Caco-2 (cell line): ENCODE measurements at regions of chr13 and their contacts with region 1.

Region 1: DNA sequence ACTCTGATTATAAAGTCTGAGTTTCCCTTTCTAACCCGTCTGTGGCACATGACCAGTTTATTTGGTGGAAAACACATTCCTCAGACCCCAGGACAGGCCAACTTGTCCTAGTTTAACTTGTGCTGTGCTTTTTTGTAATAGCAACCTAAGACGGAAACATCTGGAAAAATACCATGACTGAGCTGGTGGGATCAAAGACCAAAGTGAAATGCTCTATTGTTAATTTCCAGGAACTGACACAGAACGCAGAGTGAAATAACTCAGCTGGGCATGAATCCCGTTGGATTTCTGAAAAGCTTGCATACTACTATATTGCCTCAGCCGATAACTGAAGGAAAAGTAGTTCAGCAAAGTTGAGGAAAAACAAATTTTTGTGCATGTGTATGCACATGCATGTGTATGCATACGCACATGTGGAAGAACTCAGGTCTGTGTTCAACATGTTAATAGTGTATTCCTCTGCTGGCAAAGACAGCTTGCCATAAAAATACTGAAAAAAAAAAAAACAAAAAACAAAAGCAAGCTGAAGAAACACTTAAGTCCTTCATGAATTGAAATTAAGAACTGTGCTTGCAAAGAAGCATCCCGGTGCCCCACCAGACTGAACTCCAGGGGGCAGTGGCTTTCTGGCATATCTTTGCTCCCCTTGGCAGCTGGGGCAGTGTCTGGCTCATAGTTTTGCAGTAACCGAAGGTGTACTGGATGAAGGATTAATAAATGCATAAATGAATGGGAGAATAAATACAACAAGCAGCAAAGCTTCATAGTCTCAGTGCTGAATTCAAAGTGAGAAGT is 187.8 kb downstream of the LHFPL6 start:
- DNase-seq: peak; percentile 39 to 52
- H3K4me3 ChIP-seq: no peak overlapping the region
- H3K4me3 Mint-ChIP-seq: no peak overlapping the region
- H3K27ac Mint-ChIP-seq: no peak overlapping the region
- H3K4me1 ChIP-seq: no peaks in the 10 kb centered on the region; the same call in 1 of the 2 replicates
- H3K4me1 Mint-ChIP-seq: peaks cover 7% of the 10 kb centered on the region
- H3K27me3 ChIP-seq: no peaks in the 10 kb centered on the region
- H3K27me3 Mint-ChIP-seq: peaks cover 9% of the 10 kb centered on the region
- CTCF ChIP-seq: peak; percentile 54 to 68

Region 2: DNA sequence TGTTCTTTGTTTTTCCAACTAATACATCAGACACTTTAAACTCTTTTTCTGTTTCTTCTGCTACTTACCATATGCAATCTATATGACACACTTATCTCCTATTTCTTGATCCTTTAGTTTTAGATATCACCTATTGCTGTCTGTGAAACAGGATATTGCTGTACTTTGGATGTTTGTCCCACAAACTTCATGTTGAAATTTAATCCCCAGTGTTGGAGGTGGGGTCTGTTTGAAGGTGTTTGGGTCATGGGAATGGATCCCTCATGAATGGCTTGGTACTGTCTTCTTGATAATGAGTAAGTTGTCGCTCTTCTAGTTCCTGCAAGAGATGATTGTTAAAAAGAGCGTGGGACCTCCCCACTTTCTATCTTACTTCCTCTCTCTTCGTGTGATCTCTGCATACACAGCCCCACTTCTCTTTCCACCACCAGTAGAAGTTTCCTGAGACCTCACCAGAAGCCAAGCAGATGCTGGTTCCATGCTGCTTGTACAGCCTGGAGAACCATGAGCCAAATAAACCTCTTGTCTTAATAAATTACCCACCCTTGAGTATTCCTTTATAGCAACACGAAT is 132.7 kb before region 1 on chr13:
- CTCF ChIA-PET with region 1: no interaction called
- POLR2A ChIA-PET with region 1: no interaction called
- intact Hi-C with region 1: loop called (anchors 10 kb)
- DNase-seq: no peak
- H3K4me3 ChIP-seq: no peak overlapping the region
- H3K4me3 Mint-ChIP-seq: no peak overlapping the region
- H3K27ac Mint-ChIP-seq: no peak overlapping the region
- H3K4me1 ChIP-seq: no peaks in the 10 kb centered on the region
- H3K4me1 Mint-ChIP-seq: no peaks in the 10 kb centered on the region
- H3K27me3 ChIP-seq: no peaks in the 10 kb centered on the region
- H3K27me3 Mint-ChIP-seq: peaks cover 3% of the 10 kb centered on the region
- CTCF ChIP-seq: no peak

Region 3: GRCh38 chr13:39602614-39603366 is 187.6 kb after region 1 on chr13 and contains the start of gene LHFPL6:
- CTCF ChIA-PET with region 1: interaction called, 4 read pairs
- POLR2A ChIA-PET with region 1: no interaction called
- intact Hi-C with region 1: loop called (anchors 2 kb)
- DNase-seq: peak; percentile 72 to 74
- H3K4me3 ChIP-seq: peak within 1 kb of the TSS; percentile 53
- H3K4me3 Mint-ChIP-seq: peak within 1 kb of the TSS; percentile 83
- H3K27ac Mint-ChIP-seq: no peak within 1 kb of the TSS
- H3K4me1 ChIP-seq: 0 out of 2 replicates have a peak, but pooled peaks cover 4% of the 10 kb centered on the region
- H3K4me1 Mint-ChIP-seq: peaks cover 5% of the 10 kb centered on the region
- H3K27me3 ChIP-seq: 0 out of 2 replicates have a peak, but pooled peaks cover 2% of the 10 kb centered on the region
- H3K27me3 Mint-ChIP-seq: peaks cover 23% of the 10 kb centered on the region
- CTCF ChIP-seq: peak in 1 of 2 experiments; percentile 46
- total RNA-seq, gene LHFPL6: 3.6 and 3.9 TPM in 2 replicates

Region 4: GRCh38 chr13:39623466-39623865 is 208.3 kb after region 1 on chr13:
- CTCF ChIA-PET with region 1: no interaction called
- POLR2A ChIA-PET with region 1: no interaction called
- intact Hi-C with region 1: no loop called
- DNase-seq: no peak
- H3K4me3 ChIP-seq: no peak overlapping the region
- H3K4me3 Mint-ChIP-seq: no peak overlapping the region
- H3K27ac Mint-ChIP-seq: no peak overlapping the region
- H3K4me1 ChIP-seq: no peaks in the 10 kb centered on the region
- H3K4me1 Mint-ChIP-seq: no peaks in the 10 kb centered on the region
- H3K27me3 ChIP-seq: no peaks in the 10 kb centered on the region
- H3K27me3 Mint-ChIP-seq: peaks cover 19% of the 10 kb centered on the region
- CTCF ChIP-seq: no peak